B cell (primary cell): ENCODE measurements at regions of chr6 and their contacts with region 1.

Region 1: GRCh38 chr6:85460921-85461797 is 11.3 kb downstream of the NT5E start:
- DNase-seq: no peak
- ATAC-seq: peak; percentile 61
- H3K4me3 ChIP-seq: no peak overlapping the region
- H3K4me3 Mint-ChIP-seq: peak overlapping the region; percentile 51
- H3K27ac ChIP-seq: peak overlapping the region; percentile 72 to 74
- H3K27ac Mint-ChIP-seq: peak overlapping the region; percentile 93
- H3K4me1 ChIP-seq: peaks cover 48 to 75% of the 10 kb centered on the region in 2 donors
- H3K4me1 Mint-ChIP-seq: peaks cover 91% of the 10 kb centered on the region
- H3K27me3 ChIP-seq: peaks cover 0 to 3% (median 0%) of the 10 kb centered on the region in 4 experiments
- H3K27me3 Mint-ChIP-seq: peaks cover 2% of the 10 kb centered on the region
- CTCF ChIP-seq: no peak

Region 2: GRCh38 chr6:85390105-85390728 is 70.9 kb before region 1 on chr6:
- CTCF ChIA-PET with region 1: no interaction called
- POLR2A ChIA-PET with region 1: no interaction called
- intact Hi-C with region 1: no loop called
- DNase-seq: no peak
- ATAC-seq: no peak
- H3K4me3 ChIP-seq: no peak overlapping the region
- H3K4me3 Mint-ChIP-seq: no peak overlapping the region
- H3K27ac ChIP-seq: no peak overlapping the region
- H3K27ac Mint-ChIP-seq: no peak overlapping the region
- H3K4me1 ChIP-seq: no peaks in the 10 kb centered on the region
- H3K4me1 Mint-ChIP-seq: no peaks in the 10 kb centered on the region
- H3K27me3 ChIP-seq: peaks cover 0 to 3% (median 0%) of the 10 kb centered on the region in 4 experiments
- H3K27me3 Mint-ChIP-seq: peaks cover 14% of the 10 kb centered on the region
- CTCF ChIP-seq: no peak

Region 3: DNA sequence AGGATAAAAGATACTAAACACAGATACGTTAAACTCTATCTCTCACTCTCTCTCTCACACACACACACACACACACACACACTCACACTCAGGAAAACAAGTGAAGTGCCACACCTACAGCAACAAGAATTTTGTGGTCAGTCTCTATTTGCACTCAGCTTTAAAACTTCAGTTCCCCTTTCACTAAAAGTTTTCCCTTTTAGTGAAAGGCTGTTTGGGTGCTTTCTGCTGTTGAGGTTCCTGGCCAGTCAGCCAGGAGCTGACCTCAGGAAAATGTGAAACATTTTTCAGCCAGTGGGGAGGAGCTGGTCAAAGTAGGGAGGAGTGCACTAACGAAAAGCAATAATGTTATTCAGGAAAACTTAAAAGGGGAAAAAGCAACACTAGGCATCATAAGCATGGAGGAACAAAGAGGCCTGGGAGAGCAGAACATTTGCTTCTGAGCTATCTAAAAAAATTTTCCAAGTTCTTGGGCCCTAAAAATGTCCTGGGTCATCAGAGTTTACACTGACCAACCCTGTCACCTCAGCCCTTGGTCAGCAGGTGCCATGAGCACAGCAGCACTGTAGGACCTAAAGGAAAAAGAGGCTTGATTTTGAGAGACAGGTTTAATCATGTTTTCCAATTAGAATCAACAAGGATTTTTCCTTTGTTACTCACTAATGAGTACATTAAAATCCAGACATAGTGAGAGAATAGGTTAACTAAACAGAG is 42.0 kb before region 1 on chr6:
- CTCF ChIA-PET with region 1: no interaction called
- POLR2A ChIA-PET with region 1: no interaction called
- intact Hi-C with region 1: loop called (anchors 5 kb)
- DNase-seq: peak; percentile 23
- ATAC-seq: peak; percentile 75
- H3K4me3 ChIP-seq: no peak overlapping the region
- H3K4me3 Mint-ChIP-seq: peak overlapping the region; percentile 76
- H3K27ac ChIP-seq: peak overlapping the region; percentile 30 to 60
- H3K27ac Mint-ChIP-seq: peak overlapping the region; percentile 96
- H3K4me1 ChIP-seq: peaks cover 22 to 23% of the 10 kb centered on the region in 2 donors
- H3K4me1 Mint-ChIP-seq: peaks cover 40% of the 10 kb centered on the region
- H3K27me3 ChIP-seq: no peaks in the 10 kb centered on the region
- H3K27me3 Mint-ChIP-seq: peaks cover 9% of the 10 kb centered on the region
- CTCF ChIP-seq: no peak